ENCODE measurements at regions of chr1 and their contacts with region 1.

Region 1: GRCh38 chr1:179882243-179883039 is at the start of gene TOR1AIP1:
- DNase-seq: peak; percentile 96 to 98
- ATAC-seq: peak; percentile 77 to 91 (median 80)
- H3K4me3 ChIP-seq: peak within 1 kb of the TSS; percentile 96
- H3K4me3 Mint-ChIP-seq: peak within 1 kb of the TSS; percentile 97
- H3K27ac ChIP-seq: peak within 1 kb of the TSS; percentile 92
- H3K27ac Mint-ChIP-seq: peak within 1 kb of the TSS; percentile 99 to 100
- H3K4me1 ChIP-seq: peaks cover 11% of the 10 kb centered on the region
- H3K4me1 Mint-ChIP-seq: peaks cover 42 to 45% of the 10 kb centered on the region in 2 donors
- H3K27me3 ChIP-seq: no peaks in the 10 kb centered on the region
- H3K27me3 Mint-ChIP-seq: no peaks in the 10 kb centered on the region
- CTCF ChIP-seq: peak; percentile 46
- total RNA-seq, gene TOR1AIP1: 55.6 to 63.9 (median 59.5) TPM

Region 2: DNA sequence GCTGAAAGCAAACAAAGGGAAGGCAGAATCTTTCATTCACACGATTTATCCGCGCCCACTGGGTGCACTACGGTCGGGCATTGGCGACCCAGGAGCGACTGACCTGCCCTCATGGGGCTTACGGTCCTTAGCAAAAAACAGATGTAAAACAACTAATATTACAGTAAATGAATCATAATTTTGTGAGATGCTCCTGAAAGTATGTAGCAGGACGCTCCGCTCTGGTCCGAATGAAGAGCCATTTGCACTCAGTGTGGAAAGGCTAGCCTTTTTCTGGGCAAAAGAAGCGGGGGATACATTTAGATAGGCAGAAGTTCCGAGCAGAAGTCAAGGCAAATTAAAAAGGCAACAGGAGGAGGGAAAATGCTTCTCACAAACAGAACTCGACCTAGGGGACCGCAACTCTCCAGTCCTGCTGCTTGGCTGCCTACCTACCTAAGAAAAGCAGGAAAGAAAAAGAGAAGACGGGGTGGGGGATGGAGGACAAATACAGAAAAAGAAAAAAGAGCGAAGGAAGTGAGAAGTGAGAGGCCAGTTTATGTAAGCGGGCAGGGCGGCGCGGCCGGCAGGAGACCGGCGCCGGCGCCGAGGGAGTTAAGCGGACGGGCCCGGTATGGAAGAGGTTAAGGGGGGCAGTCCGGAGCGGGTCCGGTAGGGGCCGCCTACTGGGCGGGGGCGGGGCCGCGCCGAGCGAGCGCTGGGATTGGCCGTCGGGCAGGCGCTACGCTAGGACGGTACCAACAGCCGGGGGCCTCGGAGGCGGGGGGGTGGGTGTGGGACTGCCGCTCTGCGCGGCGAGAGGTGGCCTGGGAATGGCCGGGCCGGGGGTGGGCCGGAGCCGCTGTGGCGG is 857.1 kb before region 1 on chr1 and contains the start of gene FAM20B:
- intact Hi-C with region 1: loop called (anchors 5 kb)
- DNase-seq: peak; percentile 90 to 92
- ATAC-seq: peak; percentile 86 to 96 (median 89)
- H3K4me3 ChIP-seq: peak within 1 kb of the TSS; percentile 67
- H3K4me3 Mint-ChIP-seq: peak within 1 kb of the TSS; percentile 93
- H3K27ac ChIP-seq: peak within 1 kb of the TSS; percentile 95
- H3K27ac Mint-ChIP-seq: peak within 1 kb of the TSS; percentile 84 to 95
- H3K4me1 ChIP-seq: peaks cover 9% of the 10 kb centered on the region
- H3K4me1 Mint-ChIP-seq: peaks cover 43 to 44% of the 10 kb centered on the region in 2 donors
- H3K27me3 ChIP-seq: no peaks in the 10 kb centered on the region
- H3K27me3 Mint-ChIP-seq: peaks cover 5 to 12% of the 10 kb centered on the region in 2 donors
- CTCF ChIP-seq: no peak
- total RNA-seq, gene FAM20B: 27.6 to 35.2 (median 29.0) TPM

Region 3: DNA sequence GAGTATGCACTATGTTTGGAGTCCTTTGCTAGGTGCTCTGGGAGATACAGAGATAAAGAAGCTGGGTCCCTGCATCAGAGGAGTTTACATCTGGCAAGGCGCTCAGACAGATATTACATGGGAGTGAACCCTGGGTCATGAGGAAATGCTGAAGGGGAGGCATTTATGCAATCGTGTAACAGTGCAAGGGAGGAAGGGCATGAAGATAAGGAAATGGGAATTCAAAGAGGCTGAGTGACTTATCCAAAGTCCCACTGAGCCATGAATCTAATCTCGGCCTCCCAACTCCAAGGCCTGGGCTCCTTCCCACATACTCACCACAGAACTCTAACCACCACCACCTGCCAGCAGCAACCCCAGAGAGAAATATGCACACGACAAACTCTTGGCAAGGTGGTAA is 87.8 kb before region 1 on chr1:
- intact Hi-C with region 1: no loop called
- DNase-seq: no peak
- ATAC-seq: no peak
- H3K4me3 ChIP-seq: no peak overlapping the region
- H3K4me3 Mint-ChIP-seq: no peak overlapping the region
- H3K27ac ChIP-seq: no peak overlapping the region
- H3K27ac Mint-ChIP-seq: no peak overlapping the region
- H3K4me1 ChIP-seq: no peaks in the 10 kb centered on the region
- H3K4me1 Mint-ChIP-seq: no peaks in the 10 kb centered on the region
- H3K27me3 ChIP-seq: no peaks in the 10 kb centered on the region
- H3K27me3 Mint-ChIP-seq: peaks cover 0 to 15% of the 10 kb centered on the region in 2 donors
- CTCF ChIP-seq: no peak

Region 4: DNA sequence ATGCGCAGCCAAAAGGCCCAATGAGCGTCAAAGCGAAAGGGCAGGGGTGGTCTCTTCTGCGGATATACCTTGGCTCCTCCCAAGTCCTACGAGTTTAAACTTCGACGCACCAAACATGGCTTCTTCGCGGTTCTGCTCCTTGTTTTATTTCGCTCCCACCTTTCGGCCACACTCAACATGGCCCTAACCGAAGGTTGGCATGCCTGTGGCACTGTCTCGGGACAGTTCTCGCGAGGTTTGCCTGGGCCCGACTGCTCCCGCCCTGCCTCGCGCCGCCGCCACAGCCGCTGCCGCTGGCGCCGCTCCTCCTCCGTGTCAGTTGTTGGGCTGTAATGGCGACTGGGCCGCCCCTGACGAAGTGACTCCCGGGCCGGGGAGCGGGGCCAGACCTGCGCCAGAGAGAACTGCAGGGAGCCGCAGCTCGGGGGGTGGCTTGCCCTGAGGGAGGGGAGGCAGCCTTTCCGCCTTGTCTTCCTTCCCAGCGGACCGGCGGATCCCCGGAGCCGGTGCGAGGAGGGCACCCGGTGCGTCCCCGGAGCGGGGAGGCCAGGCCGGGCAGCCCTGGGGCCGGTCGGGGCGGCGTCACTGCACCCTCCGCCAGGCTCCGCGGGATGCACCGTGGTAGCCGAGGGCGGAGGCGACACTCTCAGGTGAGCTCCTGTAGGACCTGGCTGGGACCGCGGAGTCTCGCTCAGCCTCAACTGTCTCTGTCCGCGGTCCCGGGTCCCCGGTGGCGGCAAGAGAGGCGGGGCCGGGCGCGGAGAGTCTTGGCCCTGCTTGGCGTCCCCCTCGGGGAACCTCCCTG is 72.3 kb after region 1 on chr1 and contains the start of gene CEP350:
- intact Hi-C with region 1: loop called (anchors 1 kb)
- DNase-seq: peak; percentile 95 to 100
- ATAC-seq: peak; percentile 87 to 97 (median 90)
- H3K4me3 ChIP-seq: peak within 1 kb of the TSS; percentile 69
- H3K4me3 Mint-ChIP-seq: peak within 1 kb of the TSS; percentile 93
- H3K27ac ChIP-seq: peak within 1 kb of the TSS; percentile 80
- H3K27ac Mint-ChIP-seq: peak within 1 kb of the TSS; percentile 95 to 96
- H3K4me1 ChIP-seq: peaks cover 18% of the 10 kb centered on the region
- H3K4me1 Mint-ChIP-seq: peaks cover 52 to 53% of the 10 kb centered on the region in 2 donors
- H3K27me3 ChIP-seq: no peaks in the 10 kb centered on the region
- H3K27me3 Mint-ChIP-seq: no peaks in the 10 kb centered on the region
- CTCF ChIP-seq: no peak
- total RNA-seq, gene CEP350: 66.9 to 83.7 (median 75.3) TPM

Region 5: GRCh38 chr1:180065811-180066549 is 183.5 kb after region 1 on chr1:
- intact Hi-C with region 1: no loop called
- DNase-seq: no peak
- ATAC-seq: no peak
- H3K4me3 ChIP-seq: no peak overlapping the region
- H3K4me3 Mint-ChIP-seq: no peak overlapping the region
- H3K27ac ChIP-seq: no peak overlapping the region
- H3K27ac Mint-ChIP-seq: no peak overlapping the region
- H3K4me1 ChIP-seq: no peaks in the 10 kb centered on the region
- H3K4me1 Mint-ChIP-seq: peaks cover 9% of the 10 kb centered on the region in 2 donors
- H3K27me3 ChIP-seq: no peaks in the 10 kb centered on the region
- H3K27me3 Mint-ChIP-seq: no peaks in the 10 kb centered on the region
- CTCF ChIP-seq: no peak

Region 6: GRCh38 chr1:180154325-180155181 is 272.1 kb after region 1 on chr1 and contains the start of gene QSOX1:
- intact Hi-C with region 1: loop called (anchors 5 kb)
- DNase-seq: peak; percentile 83 to 95
- ATAC-seq: peak; percentile 93 to 97 (median 93)
- H3K4me3 ChIP-seq: peak within 1 kb of the TSS; percentile 73
- H3K4me3 Mint-ChIP-seq: peak within 1 kb of the TSS; percentile 88
- H3K27ac ChIP-seq: peak within 1 kb of the TSS; percentile 49
- H3K27ac Mint-ChIP-seq: peak within 1 kb of the TSS; percentile 68 to 96
- H3K4me1 ChIP-seq: peaks cover 20% of the 10 kb centered on the region
- H3K4me1 Mint-ChIP-seq: peaks cover 33 to 38% of the 10 kb centered on the region in 2 donors
- H3K27me3 ChIP-seq: no peaks in the 10 kb centered on the region
- H3K27me3 Mint-ChIP-seq: no peaks in the 10 kb centered on the region
- CTCF ChIP-seq: no peak
- total RNA-seq, gene QSOX1: 31.0 to 42.7 (median 38.2) TPM

Region 7: GRCh38 chr1:180631766-180632325 is 749.4 kb after region 1 on chr1 and contains the start of gene XPR1:
- intact Hi-C with region 1: loop called (anchors 5 kb)
- DNase-seq: peak; percentile 88 to 100
- ATAC-seq: peak; percentile 95 to 100 (median 96)
- H3K4me3 ChIP-seq: peak within 1 kb of the TSS; percentile 95
- H3K4me3 Mint-ChIP-seq: no peak within 1 kb of the TSS
- H3K27ac ChIP-seq: peak within 1 kb of the TSS; percentile 92
- H3K27ac Mint-ChIP-seq: no peak within 1 kb of the TSS
- H3K4me1 ChIP-seq: peaks cover 3% of the 10 kb centered on the region
- H3K4me1 Mint-ChIP-seq: peaks cover 0 to 14% of the 10 kb centered on the region in 2 donors
- H3K27me3 ChIP-seq: no peaks in the 10 kb centered on the region
- H3K27me3 Mint-ChIP-seq: peaks cover 8 to 9% of the 10 kb centered on the region in 2 donors
- CTCF ChIP-seq: no peak
- total RNA-seq, gene XPR1: 14.8 to 18.2 (median 16.7) TPM